ENCODE measurements at regions of chr20 and their contacts with region 1.

Region 1: DNA sequence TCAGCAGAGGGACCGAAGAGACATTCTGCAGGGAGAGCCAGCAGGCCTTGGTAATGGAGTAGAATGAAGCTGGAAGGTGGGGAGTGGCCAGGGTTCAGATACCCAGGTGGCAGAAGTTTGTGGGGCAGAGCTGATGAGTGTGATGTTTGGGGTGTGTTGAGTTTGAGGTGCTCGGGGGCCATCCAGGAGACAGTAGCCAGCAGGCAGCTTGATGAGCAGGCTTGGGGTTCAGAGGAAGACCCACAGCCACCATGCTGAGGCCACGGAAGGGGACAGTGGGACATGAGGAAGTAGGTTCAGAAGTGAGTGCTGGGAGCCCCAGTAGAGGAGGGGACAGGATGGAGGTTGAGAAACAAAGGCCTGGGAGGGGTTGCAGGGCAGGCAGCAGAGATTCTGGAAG is 11.1 kb upstream of the FOXS1 start:
- DNase-seq: peak; percentile 4
- ATAC-seq: no peak
- H3K4me3 Mint-ChIP-seq: no peak overlapping the region
- H3K27ac Mint-ChIP-seq: no peak overlapping the region
- H3K4me1 Mint-ChIP-seq: peaks cover 9% of the 10 kb centered on the region
- H3K27me3 Mint-ChIP-seq: peaks cover 43% of the 10 kb centered on the region
- CTCF ChIP-seq: no peak

Region 2: DNA sequence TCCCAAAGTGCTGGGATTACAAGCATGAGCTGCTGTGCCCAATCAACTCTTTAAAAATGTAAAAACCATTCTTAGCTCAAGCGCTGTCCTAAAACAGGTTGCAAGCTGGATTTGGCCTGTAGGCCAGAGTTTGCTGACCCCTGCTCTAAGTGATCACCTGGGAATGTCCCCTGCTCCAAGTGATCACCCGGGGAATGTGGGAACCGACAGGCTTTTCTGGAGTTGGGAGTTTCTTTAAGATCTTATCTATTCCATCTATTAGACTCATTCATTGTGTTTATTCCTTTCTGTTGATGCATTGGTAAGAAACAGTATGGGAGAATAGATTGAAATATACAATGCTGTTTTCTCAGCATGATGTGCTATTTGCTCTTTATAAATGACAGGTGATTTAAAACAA is 61.1 kb before region 1 on chr20:
- CTCF ChIA-PET with region 1: no interaction called
- POLR2A ChIA-PET with region 1: no interaction called
- DNase-seq: no peak
- ATAC-seq: no peak
- H3K4me3 Mint-ChIP-seq: no peak overlapping the region
- H3K27ac Mint-ChIP-seq: no peak overlapping the region
- H3K4me1 Mint-ChIP-seq: no peaks in the 10 kb centered on the region
- H3K27me3 Mint-ChIP-seq: no peaks in the 10 kb centered on the region
- CTCF ChIP-seq: no peak

Region 3: GRCh38 chr20:31822421-31823330 is 33.8 kb before region 1 on chr20:
- CTCF ChIA-PET with region 1: interaction called, 25 read pairs
- POLR2A ChIA-PET with region 1: no interaction called
- DNase-seq: peak; percentile 92
- ATAC-seq: peak; percentile 73
- H3K4me3 Mint-ChIP-seq: peak overlapping the region; percentile 49
- H3K27ac Mint-ChIP-seq: no peak overlapping the region
- H3K4me1 Mint-ChIP-seq: peaks cover 7% of the 10 kb centered on the region; the same call in 1 of the 2 replicates
- H3K27me3 Mint-ChIP-seq: no peaks in the 10 kb centered on the region
- CTCF ChIP-seq: peak; percentile 99

Region 4: GRCh38 chr20:31879143-31879987 is 22.8 kb after region 1 on chr20:
- CTCF ChIA-PET with region 1: interaction called, 16 read pairs
- POLR2A ChIA-PET with region 1: no interaction called
- DNase-seq: peak; percentile 96
- ATAC-seq: peak; percentile 99
- H3K4me3 Mint-ChIP-seq: peak overlapping the region; percentile 92
- H3K27ac Mint-ChIP-seq: peak overlapping the region; percentile 76; the same call in 1 of the 2 replicates
- H3K4me1 Mint-ChIP-seq: no peaks in the 10 kb centered on the region
- H3K27me3 Mint-ChIP-seq: peaks cover 25% of the 10 kb centered on the region
- CTCF ChIP-seq: no peak

Region 5: GRCh38 chr20:31923388-31924331 is 67.1 kb after region 1 on chr20:
- CTCF ChIA-PET with region 1: interaction called, 19 read pairs
- POLR2A ChIA-PET with region 1: no interaction called
- DNase-seq: no peak
- ATAC-seq: no peak
- H3K4me3 Mint-ChIP-seq: no peak overlapping the region
- H3K27ac Mint-ChIP-seq: no peak overlapping the region
- H3K4me1 Mint-ChIP-seq: peaks cover 19% of the 10 kb centered on the region
- H3K27me3 Mint-ChIP-seq: peaks cover under 1% of the 10 kb centered on the region; the same call in 1 of the 2 replicates
- CTCF ChIP-seq: no peak

Region 6: DNA sequence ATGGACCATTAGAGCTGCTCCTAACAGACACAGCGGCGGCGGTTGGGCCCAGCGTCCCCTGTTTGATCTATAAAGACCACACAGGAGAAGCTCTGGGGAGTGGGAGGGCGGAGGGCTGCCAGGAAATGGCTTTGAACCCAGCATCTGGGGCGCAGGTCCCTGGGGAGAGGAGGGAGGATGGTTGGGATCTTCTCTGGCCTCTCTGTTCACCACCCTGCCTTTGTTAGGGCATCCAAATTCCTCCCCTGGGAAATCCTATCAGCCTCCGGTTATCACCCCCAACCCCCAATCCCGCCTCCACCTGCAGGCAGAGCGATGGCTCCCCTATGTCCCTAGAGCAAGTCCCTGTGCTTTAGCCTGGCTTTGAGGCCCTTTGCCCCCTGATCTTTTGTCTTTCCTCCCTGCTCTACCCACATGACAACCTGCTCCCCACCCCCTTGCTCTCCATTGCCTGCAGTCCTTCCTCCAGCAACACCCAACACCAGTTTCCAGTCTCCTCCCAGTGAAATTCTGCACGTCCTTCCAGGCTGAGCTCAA is 118.5 kb after region 1 on chr20:
- CTCF ChIA-PET with region 1: interaction called, 23 read pairs
- POLR2A ChIA-PET with region 1: no interaction called
- DNase-seq: peak; percentile 43
- ATAC-seq: peak; percentile 92
- H3K4me3 Mint-ChIP-seq: peak overlapping the region; percentile 30
- H3K27ac Mint-ChIP-seq: peak overlapping the region; percentile 82
- H3K4me1 Mint-ChIP-seq: peaks cover 20% of the 10 kb centered on the region
- H3K27me3 Mint-ChIP-seq: peaks cover 4% of the 10 kb centered on the region; the same call in 1 of the 2 replicates
- CTCF ChIP-seq: no peak

Measured in WTC11 (cell line).